ENCODE measurements at regions of chr2 and their contacts with region 1.

Region 1: GRCh38 chr2:165239230-165239629 is at the start of gene SCN2A:
- DNase-seq: peak; percentile 35
- H3K4me3 Mint-ChIP-seq: no peak within 1 kb of the TSS
- H3K27ac Mint-ChIP-seq: no peak within 1 kb of the TSS
- H3K4me1 Mint-ChIP-seq: no peaks in the 10 kb centered on the region
- H3K27me3 Mint-ChIP-seq: no peaks in the 10 kb centered on the region
- CTCF ChIP-seq: peak; percentile 73
- total RNA-seq, gene SCN2A: 0.07 and 0.19 TPM in 2 replicates

Region 2: GRCh38 chr2:165149439-165149838 is 89.8 kb before region 1 on chr2:
- CTCF ChIA-PET with region 1: no interaction called
- intact Hi-C with region 1: no loop called
- DNase-seq: no peak
- H3K4me3 Mint-ChIP-seq: no peak overlapping the region
- H3K27ac Mint-ChIP-seq: no peak overlapping the region
- H3K4me1 Mint-ChIP-seq: peaks cover 6% of the 10 kb centered on the region
- H3K27me3 Mint-ChIP-seq: no peaks in the 10 kb centered on the region
- CTCF ChIP-seq: no peak

Region 3: DNA sequence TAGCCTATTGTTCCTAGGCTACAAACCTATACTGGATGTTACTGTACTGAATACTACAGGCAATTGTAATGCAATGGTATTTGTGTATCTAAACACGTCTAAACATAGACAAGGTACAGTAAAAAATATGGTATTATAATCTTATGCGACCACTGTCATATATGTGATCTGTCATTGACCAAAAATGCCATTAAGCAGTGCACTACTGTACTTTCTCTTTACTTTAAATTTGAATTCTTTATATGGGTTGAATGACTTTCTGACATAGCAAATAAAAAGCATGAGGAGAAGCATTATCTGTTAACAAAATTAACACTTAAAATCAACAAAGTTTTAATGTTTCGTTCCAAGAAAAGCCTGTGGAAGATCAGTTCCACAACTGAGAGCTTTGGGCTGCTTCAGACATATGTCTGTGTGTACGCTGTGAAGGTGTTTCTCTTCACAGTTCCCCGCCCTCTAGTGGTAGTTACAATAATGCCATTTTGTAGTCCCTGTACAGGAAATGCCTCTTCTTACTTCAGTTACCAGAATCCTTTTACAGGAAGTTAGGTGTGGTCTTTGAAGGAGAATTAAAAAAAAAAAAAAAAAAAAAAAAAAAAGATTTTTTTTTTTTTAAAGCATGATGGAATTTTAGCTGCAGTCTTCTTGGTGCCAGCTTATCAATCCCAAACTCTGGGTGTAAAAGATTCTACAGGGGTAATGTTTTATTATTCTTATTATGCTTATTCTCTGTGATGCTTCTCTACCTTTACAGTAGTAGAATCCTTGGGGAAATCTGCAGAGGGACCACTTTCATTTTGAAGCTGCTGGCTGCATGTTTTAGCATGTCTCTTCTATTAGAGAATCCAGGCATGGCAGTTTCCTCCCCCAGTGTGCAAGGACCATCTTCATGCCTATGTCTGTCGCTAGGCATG is 54.5 kb after region 1 on chr2:
- CTCF ChIA-PET with region 1: interaction called, 4 read pairs
- intact Hi-C with region 1: loop called (anchors 1 kb)
- DNase-seq: peak; percentile 71
- H3K4me3 Mint-ChIP-seq: no peak overlapping the region
- H3K27ac Mint-ChIP-seq: no peak overlapping the region
- H3K4me1 Mint-ChIP-seq: no peaks in the 10 kb centered on the region
- H3K27me3 Mint-ChIP-seq: no peaks in the 10 kb centered on the region
- CTCF ChIP-seq: peak; percentile 48

Region 4: GRCh38 chr2:165305391-165306096 is 66.3 kb after region 1 on chr2:
- CTCF ChIA-PET with region 1: interaction called, 3 read pairs
- intact Hi-C with region 1: loop called (anchors 2 kb)
- DNase-seq: no peak
- H3K4me3 Mint-ChIP-seq: no peak overlapping the region
- H3K27ac Mint-ChIP-seq: peak overlapping the region; percentile 10
- H3K4me1 Mint-ChIP-seq: peaks cover 12% of the 10 kb centered on the region
- H3K27me3 Mint-ChIP-seq: no peaks in the 10 kb centered on the region
- CTCF ChIP-seq: no peak

Region 5: DNA sequence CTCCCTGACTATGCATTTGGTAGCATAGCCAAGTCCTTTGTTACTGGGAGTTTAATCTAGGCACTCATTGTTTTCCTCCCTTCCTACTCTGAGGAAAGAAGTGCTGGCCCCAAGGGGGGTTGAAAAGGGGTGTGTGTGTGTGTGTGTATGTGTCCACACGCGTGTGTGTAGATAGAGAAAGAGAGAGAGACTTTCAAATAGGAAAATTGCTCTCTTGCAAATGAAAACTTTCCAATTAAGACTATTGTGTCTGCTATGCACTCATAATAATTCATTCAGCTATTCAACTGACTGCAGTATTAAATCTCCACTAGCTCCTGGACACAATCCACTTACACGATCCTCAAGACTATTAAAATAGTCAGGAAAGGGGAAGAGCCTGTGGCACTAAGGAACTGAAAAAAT is 137.3 kb after region 1 on chr2:
- CTCF ChIA-PET with region 1: no interaction called
- intact Hi-C with region 1: loop called (anchors 10 kb)
- DNase-seq: no peak
- H3K4me3 Mint-ChIP-seq: no peak overlapping the region
- H3K27ac Mint-ChIP-seq: no peak overlapping the region
- H3K4me1 Mint-ChIP-seq: no peaks in the 10 kb centered on the region
- H3K27me3 Mint-ChIP-seq: no peaks in the 10 kb centered on the region
- CTCF ChIP-seq: no peak

Region 6: DNA sequence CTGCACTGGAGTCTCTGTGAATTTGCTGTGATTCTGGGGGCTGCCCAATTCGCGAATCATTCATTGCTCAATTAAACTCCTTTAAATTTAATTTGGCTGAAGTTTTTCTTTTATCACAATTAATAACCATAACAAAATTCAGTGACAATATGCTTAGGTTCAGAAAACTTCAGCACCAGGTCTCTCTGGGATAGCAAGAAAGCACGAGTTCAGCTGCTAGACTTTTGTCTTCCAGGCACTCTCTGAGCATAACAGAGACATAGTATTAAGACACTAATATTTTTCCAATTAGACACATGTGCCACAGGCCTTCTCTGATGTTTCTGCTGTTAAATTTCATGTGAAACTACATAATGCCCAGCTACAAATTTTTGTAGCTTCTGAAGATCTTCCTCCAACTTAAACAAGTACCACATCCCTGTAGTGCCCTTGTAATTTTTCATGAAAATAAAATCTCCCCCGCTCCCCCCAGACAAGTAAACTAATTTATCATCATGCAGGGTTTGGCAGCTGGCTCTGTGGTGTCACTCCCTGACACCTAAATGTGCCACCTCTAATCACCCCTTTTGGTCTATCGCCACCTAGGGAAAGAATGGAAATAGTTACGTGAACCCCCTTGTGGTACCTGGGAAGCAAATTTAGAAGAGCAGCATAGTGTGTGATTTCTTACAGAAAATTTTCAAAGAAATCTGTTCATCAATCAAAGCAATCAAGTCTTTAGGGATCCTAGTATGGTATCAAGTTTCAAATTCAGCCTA is 324.4 kb after region 1 on chr2:
- CTCF ChIA-PET with region 1: no interaction called
- intact Hi-C with region 1: loop called (anchors 10 kb)
- DNase-seq: peak; percentile 13
- H3K4me3 Mint-ChIP-seq: no peak overlapping the region
- H3K27ac Mint-ChIP-seq: no peak overlapping the region
- H3K4me1 Mint-ChIP-seq: no peaks in the 10 kb centered on the region
- H3K27me3 Mint-ChIP-seq: no peaks in the 10 kb centered on the region
- CTCF ChIP-seq: peak; percentile 34

Measured in Calu3 (cell line).